ENCODE measurements at regions of chr5 and their contacts with region 1.

Region 1: DNA sequence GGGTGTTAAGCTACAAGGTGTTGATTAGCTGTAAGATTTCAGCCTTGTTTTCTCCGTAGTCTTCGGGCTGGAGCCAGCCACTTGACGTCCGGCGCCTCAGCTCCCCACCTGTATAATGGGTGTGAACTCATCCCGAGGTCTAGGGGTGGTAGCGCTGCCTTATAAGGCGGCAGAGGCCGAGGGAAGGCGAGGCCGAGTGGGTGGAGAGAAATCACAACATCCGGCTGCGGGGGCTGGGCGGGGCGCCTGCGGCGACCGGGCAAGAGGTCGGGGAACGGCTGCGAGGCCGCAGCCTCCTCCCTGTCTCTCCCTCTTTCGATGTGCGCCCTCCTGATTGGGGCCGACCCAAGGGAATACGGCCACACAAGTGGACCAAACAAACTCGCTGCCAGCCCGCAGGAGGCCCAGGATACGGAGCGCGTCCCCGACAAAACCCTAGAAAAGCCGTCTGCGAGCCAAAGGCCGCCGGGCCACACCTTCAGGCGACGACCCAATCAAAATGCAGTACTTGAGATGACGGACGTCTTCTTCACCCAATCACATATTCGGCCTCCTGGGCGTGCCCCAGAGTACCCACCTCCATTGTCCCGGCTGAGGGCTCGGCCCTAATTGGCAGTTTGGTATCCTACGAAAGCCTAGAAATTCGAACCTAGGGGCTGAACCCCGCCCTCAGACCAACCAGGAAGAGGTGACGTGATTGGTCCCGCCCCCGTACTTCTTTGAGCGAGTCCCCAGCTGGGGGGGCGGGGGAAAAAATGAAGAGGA is 493 bp upstream of the GRK6 start:
- DNase-seq: peak; percentile 98 to 100 (median 100)
- ATAC-seq: peak; percentile 80 to 82 (median 80)
- H3K4me3 ChIP-seq: peak overlapping the region; percentile 71 to 77
- H3K4me3 Mint-ChIP-seq: peak overlapping the region; percentile 79 to 92 (median 90)
- H3K27ac ChIP-seq: peak overlapping the region; percentile 87
- H3K27ac Mint-ChIP-seq: peak overlapping the region; percentile 99
- H3K4me1 ChIP-seq: peaks cover 32 to 61% of the 10 kb centered on the region in 2 experiments
- H3K4me1 Mint-ChIP-seq: peaks cover 49 to 56% (median 53%) of the 10 kb centered on the region in 3 donors
- H3K27me3 ChIP-seq: no peaks in the 10 kb centered on the region
- H3K27me3 Mint-ChIP-seq: no peaks in the 10 kb centered on the region

Region 2: GRCh38 chr5:175889910-175890684 is 1535.9 kb before region 1 on chr5:
- CTCF ChIA-PET with region 1: no interaction called
- POLR2A ChIA-PET with region 1: no interaction called
- DNase-seq: no peak
- ATAC-seq: no peak
- H3K4me3 ChIP-seq: no peak overlapping the region
- H3K4me3 Mint-ChIP-seq: no peak overlapping the region
- H3K27ac ChIP-seq: no peak overlapping the region
- H3K27ac Mint-ChIP-seq: no peak overlapping the region
- H3K4me1 ChIP-seq: peaks cover 2 to 10% of the 10 kb centered on the region in 2 experiments
- H3K4me1 Mint-ChIP-seq: peaks cover 11 to 20% (median 13%) of the 10 kb centered on the region in 3 donors
- H3K27me3 ChIP-seq: peaks cover 3 to 24% of the 10 kb centered on the region in 2 experiments
- H3K27me3 Mint-ChIP-seq: peaks cover 5 to 7% of the 10 kb centered on the region in 2 donors

Region 3: GRCh38 chr5:177311723-177312648 is 114.0 kb before region 1 on chr5 and contains the start of gene MXD3:
- CTCF ChIA-PET with region 1: interaction called, 4 to 10 read pairs
- POLR2A ChIA-PET with region 1: no interaction called
- DNase-seq: peak; percentile 80 to 96 (median 92)
- ATAC-seq: peak; percentile 91 to 94 (median 92)
- H3K4me3 ChIP-seq: peak within 1 kb of the TSS; percentile 65 to 73
- H3K4me3 Mint-ChIP-seq: peak within 1 kb of the TSS; percentile 71 to 90 (median 71)
- H3K27ac ChIP-seq: peak within 1 kb of the TSS; percentile 33
- H3K27ac Mint-ChIP-seq: peak within 1 kb of the TSS in 1 of 2 donors; percentile 28
- H3K4me1 ChIP-seq: peaks cover 14 to 57% of the 10 kb centered on the region in 2 experiments
- H3K4me1 Mint-ChIP-seq: peaks cover 14 to 41% (median 27%) of the 10 kb centered on the region in 3 donors
- H3K27me3 ChIP-seq: peaks cover 0 to 14% of the 10 kb centered on the region in 2 experiments
- H3K27me3 Mint-ChIP-seq: peaks cover 0 to 4% of the 10 kb centered on the region in 2 donors
- total RNA-seq, gene MXD3: 9.3 to 15.2 (median 12.4) TPM

Region 4: GRCh38 chr5:177446200-177447065 is 20.4 kb after region 1 on chr5 and contains the start of gene PRR7:
- CTCF ChIA-PET with region 1: interaction called, 4 to 17 read pairs
- POLR2A ChIA-PET with region 1: interaction called, 5 to 27 read pairs
- DNase-seq: peak; percentile 48 to 90 (median 72)
- ATAC-seq: peak; percentile 48 to 66 (median 64)
- H3K4me3 ChIP-seq: peak within 1 kb of the TSS; percentile 52 to 55
- H3K4me3 Mint-ChIP-seq: peak within 1 kb of the TSS; percentile 72 to 78 (median 72)
- H3K27ac ChIP-seq: peak within 1 kb of the TSS; percentile 87
- H3K27ac Mint-ChIP-seq: peak within 1 kb of the TSS; percentile 95
- H3K4me1 ChIP-seq: peaks cover 19 to 74% of the 10 kb centered on the region in 2 experiments
- H3K4me1 Mint-ChIP-seq: peaks cover 47 to 58% (median 53%) of the 10 kb centered on the region in 3 donors
- H3K27me3 ChIP-seq: peaks cover 0 to 2% of the 10 kb centered on the region in 2 experiments
- H3K27me3 Mint-ChIP-seq: no peaks in the 10 kb centered on the region
- total RNA-seq, gene PRR7: 9.5 to 28.2 (median 12.3) TPM

Region 5: GRCh38 chr5:177454397-177455035 is 28.5 kb after region 1 on chr5:
- CTCF ChIA-PET with region 1: interaction called in 1 of 2 experiments, 20 read pairs
- POLR2A ChIA-PET with region 1: interaction called in 1 of 2 experiments, 3 read pairs
- DNase-seq: peak; percentile 84 to 97 (median 92)
- ATAC-seq: peak; percentile 51 to 64 (median 56)
- H3K4me3 ChIP-seq: peak overlapping the region; percentile 49 to 68
- H3K4me3 Mint-ChIP-seq: peak overlapping the region; percentile 81 to 85 (median 82)
- H3K27ac ChIP-seq: peak overlapping the region; percentile 97
- H3K27ac Mint-ChIP-seq: peak overlapping the region in 1 of 2 donors; percentile 58
- H3K4me1 ChIP-seq: peaks cover 0 to 49% of the 10 kb centered on the region in 2 experiments
- H3K4me1 Mint-ChIP-seq: peaks cover 23 to 32% (median 28%) of the 10 kb centered on the region in 3 donors
- H3K27me3 ChIP-seq: peaks cover 0 to 4% of the 10 kb centered on the region in 2 experiments
- H3K27me3 Mint-ChIP-seq: no peaks in the 10 kb centered on the region